ENCODE measurements at regions of chr19 and their contacts with region 1.

Region 1: GRCh38 chr19:53158119-53158656 is 665 bp downstream of the ZNF347 start:
- DNase-seq: peak in 31 of 35 experiments; percentile 2 to 44 (median 12)
- ATAC-seq: peak; percentile 6 to 44 (median 21)
- H3K4me3 ChIP-seq: peak overlapping the region; percentile 61 to 81
- H3K4me3 Mint-ChIP-seq: peak overlapping the region; percentile 73 to 83 (median 81)
- H3K27ac ChIP-seq: peak overlapping the region; percentile 31
- H3K27ac Mint-ChIP-seq: peak overlapping the region in 1 of 2 donors; percentile 42
- H3K4me1 ChIP-seq: peaks cover 0 to 22% of the 10 kb centered on the region in 2 experiments
- H3K4me1 Mint-ChIP-seq: peaks cover 15 to 23% (median 17%) of the 10 kb centered on the region in 3 donors
- H3K27me3 ChIP-seq: peaks cover 0 to 17% of the 10 kb centered on the region in 2 experiments
- H3K27me3 Mint-ChIP-seq: no peaks in the 10 kb centered on the region

Region 2: DNA sequence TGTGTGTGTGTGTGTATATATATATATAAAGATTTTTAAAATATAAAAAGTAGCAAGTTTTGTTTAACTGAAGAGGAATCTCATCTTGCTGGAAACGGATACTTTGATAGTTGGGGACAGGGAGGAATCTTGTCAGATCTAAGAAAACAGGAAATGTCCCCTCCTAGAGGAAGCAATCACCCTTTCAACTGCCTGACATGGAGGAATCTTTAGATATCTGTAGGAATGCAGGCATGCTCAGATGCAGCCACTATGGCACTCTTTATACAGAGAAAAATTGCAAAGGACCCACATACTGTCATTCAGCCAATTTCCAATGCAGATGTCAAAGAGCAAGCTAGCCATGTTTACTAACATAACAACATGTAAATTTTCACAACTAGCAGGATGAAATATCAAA is 462.2 kb before region 1 on chr19:
- CTCF ChIA-PET with region 1: no interaction called
- POLR2A ChIA-PET with region 1: interaction called in 1 of 2 experiments, 12 read pairs
- DNase-seq: no peak
- ATAC-seq: no peak
- H3K4me3 ChIP-seq: no peak overlapping the region
- H3K4me3 Mint-ChIP-seq: no peak overlapping the region
- H3K27ac ChIP-seq: no peak overlapping the region
- H3K27ac Mint-ChIP-seq: no peak overlapping the region
- H3K4me1 ChIP-seq: peaks cover 2 to 4% of the 10 kb centered on the region in 2 experiments
- H3K4me1 Mint-ChIP-seq: peaks cover 2 to 5% (median 4%) of the 10 kb centered on the region in 3 donors
- H3K27me3 ChIP-seq: no peaks in the 10 kb centered on the region
- H3K27me3 Mint-ChIP-seq: no peaks in the 10 kb centered on the region

Region 3: GRCh38 chr19:53294786-53295441 is 136.7 kb after region 1 on chr19:
- CTCF ChIA-PET with region 1: no interaction called
- POLR2A ChIA-PET with region 1: no interaction called
- DNase-seq: no peak
- ATAC-seq: no peak
- H3K4me3 ChIP-seq: no peak overlapping the region
- H3K4me3 Mint-ChIP-seq: no peak overlapping the region
- H3K27ac ChIP-seq: no peak overlapping the region
- H3K27ac Mint-ChIP-seq: no peak overlapping the region
- H3K4me1 ChIP-seq: no peaks in the 10 kb centered on the region
- H3K4me1 Mint-ChIP-seq: no peaks in the 10 kb centered on the region
- H3K27me3 ChIP-seq: peaks cover 0 to 3% of the 10 kb centered on the region in 2 experiments
- H3K27me3 Mint-ChIP-seq: no peaks in the 10 kb centered on the region

Measured in T-cell (primary cell).